ENCODE measurements at regions of chr1 and their contacts with region 1.

Region 1: DNA sequence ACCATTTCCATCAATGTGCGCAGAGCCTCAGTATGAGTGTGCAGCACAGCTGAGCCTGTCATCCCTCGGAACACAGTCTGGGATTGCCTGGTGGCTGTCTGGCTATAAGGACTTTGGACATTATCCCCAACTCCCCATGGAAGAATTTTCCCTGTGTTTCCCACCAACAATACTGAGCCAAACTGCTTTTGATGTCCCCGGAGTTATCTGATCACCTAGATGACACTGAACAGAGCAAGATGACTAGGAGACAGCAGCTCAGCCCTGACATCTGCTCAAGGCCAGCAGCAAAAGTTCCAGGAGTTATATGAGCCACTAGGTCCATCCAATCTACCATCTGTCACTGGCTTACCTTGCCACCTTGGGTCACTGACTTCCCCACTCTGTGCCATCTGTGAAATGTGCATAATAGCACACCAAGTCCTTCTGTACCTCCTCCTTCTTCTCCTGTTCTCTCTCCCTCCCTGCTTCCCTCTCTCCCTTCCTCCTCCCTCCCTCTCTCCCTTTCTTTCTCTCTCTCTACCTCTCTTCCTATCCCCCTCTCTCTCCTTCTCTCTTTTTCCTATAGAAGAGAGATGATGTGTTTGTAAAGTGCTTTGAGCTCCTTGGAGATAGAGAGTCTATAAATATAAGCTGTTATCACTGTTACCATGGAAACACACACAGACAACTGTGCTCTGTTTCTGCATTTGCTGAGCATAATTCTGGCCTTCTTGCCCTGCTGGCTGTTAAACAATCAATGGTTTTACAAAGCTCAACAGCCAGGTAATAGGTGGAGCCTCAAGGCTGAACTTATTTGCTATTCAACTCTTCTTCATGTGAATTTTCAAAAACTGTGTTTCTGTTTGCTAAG is 19.7 kb upstream of the ATP1B1 start:
- DNase-seq: peak; percentile 13
- H3K4me3 Mint-ChIP-seq: no peak overlapping the region
- H3K27ac Mint-ChIP-seq: peak overlapping the region; percentile 72
- H3K4me1 Mint-ChIP-seq: peaks cover 20% of the 10 kb centered on the region
- H3K27me3 Mint-ChIP-seq: no peaks in the 10 kb centered on the region
- CTCF ChIP-seq: no peak

Region 2: GRCh38 chr1:168439456-168440375 is 647.1 kb before region 1 on chr1:
- CTCF ChIA-PET with region 1: interaction called, 11 read pairs
- intact Hi-C with region 1: no loop called
- DNase-seq: peak; percentile 88
- H3K4me3 Mint-ChIP-seq: peak overlapping the region; percentile 55
- H3K27ac Mint-ChIP-seq: no peak overlapping the region
- H3K4me1 Mint-ChIP-seq: peaks cover 28% of the 10 kb centered on the region
- H3K27me3 Mint-ChIP-seq: peaks cover 9% of the 10 kb centered on the region
- CTCF ChIP-seq: peak; percentile 92

Region 3: DNA sequence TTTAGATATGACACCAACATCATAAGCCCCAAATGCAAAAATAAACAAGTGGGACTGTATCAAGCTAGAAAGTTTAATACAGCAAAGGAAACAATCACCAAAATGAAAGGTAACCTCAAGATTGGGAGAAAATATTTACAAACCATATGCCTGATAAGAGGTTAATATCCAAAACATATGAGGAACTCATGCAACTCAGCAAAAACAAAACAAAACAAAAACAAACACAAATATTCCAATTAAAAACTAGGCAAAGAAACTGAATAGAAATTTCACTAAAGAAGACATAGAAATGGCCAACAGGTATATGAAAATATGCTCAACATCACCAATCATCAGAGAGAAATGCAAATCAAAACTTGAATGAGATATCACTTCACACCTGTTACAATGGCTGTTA is 96.8 kb before region 1 on chr1:
- CTCF ChIA-PET with region 1: interaction called, 11 read pairs
- intact Hi-C with region 1: no loop called
- DNase-seq: no peak
- H3K4me3 Mint-ChIP-seq: no peak overlapping the region
- H3K27ac Mint-ChIP-seq: no peak overlapping the region
- H3K4me1 Mint-ChIP-seq: no peaks in the 10 kb centered on the region
- H3K27me3 Mint-ChIP-seq: no peaks in the 10 kb centered on the region
- CTCF ChIP-seq: no peak